ENCODE measurements at regions of chr6 and their contacts with region 1.

Region 1: GRCh38 chr6:133040094-133040802 is 200.9 kb upstream of the EYA4 start:
- DNase-seq: peak; percentile 34
- ATAC-seq: peak; percentile 62
- H3K4me3 ChIP-seq: no peak overlapping the region
- H3K27ac ChIP-seq: no peak overlapping the region
- H3K4me1 ChIP-seq: no peaks in the 10 kb centered on the region
- H3K27me3 ChIP-seq: no peaks in the 10 kb centered on the region
- CTCF ChIP-seq: peak; percentile 59
- POLR2A ChIP-seq: no peak
- RAD21 ChIP-seq: peak; percentile 61

Region 2: GRCh38 chr6:132820629-132821381 is 219.4 kb before region 1 on chr6:
- CTCF ChIA-PET with region 1: no interaction called
- POLR2A ChIA-PET with region 1: no interaction called
- dilution Hi-C with region 1: no loop called
- in situ Hi-C with region 1: loop called (anchors 10 kb)
- intact Hi-C with region 1: no loop called
- DNase-seq: peak; percentile 52
- ATAC-seq: peak; percentile 41
- H3K4me3 ChIP-seq: no peak overlapping the region
- H3K27ac ChIP-seq: peak overlapping the region; percentile 42; the same call in 1 of the 2 replicates
- H3K4me1 ChIP-seq: peaks cover 4% of the 10 kb centered on the region
- H3K27me3 ChIP-seq: no peaks in the 10 kb centered on the region
- CTCF ChIP-seq: no peak
- POLR2A ChIP-seq: peak; percentile 45
- RAD21 ChIP-seq: no peak

Region 3: GRCh38 chr6:132919045-132919860 is 121.0 kb before region 1 on chr6:
- CTCF ChIA-PET with region 1: no interaction called
- POLR2A ChIA-PET with region 1: no interaction called
- dilution Hi-C with region 1: no loop called
- in situ Hi-C with region 1: no loop called
- intact Hi-C with region 1: no loop called
- DNase-seq: peak; percentile 98
- ATAC-seq: peak; percentile 98
- H3K4me3 ChIP-seq: peak overlapping the region; percentile 2; the same call in 1 of the 2 replicates
- H3K27ac ChIP-seq: peak overlapping the region; percentile 6; the same call in 1 of the 2 replicates
- H3K4me1 ChIP-seq: peaks cover 7% of the 10 kb centered on the region
- H3K27me3 ChIP-seq: no peaks in the 10 kb centered on the region
- CTCF ChIP-seq: no peak
- POLR2A ChIP-seq: no peak
- RAD21 ChIP-seq: no peak

Measured in IMR-90 (cell line).